ENCODE measurements at regions of chr4 and their contacts with region 1.

Region 1: DNA sequence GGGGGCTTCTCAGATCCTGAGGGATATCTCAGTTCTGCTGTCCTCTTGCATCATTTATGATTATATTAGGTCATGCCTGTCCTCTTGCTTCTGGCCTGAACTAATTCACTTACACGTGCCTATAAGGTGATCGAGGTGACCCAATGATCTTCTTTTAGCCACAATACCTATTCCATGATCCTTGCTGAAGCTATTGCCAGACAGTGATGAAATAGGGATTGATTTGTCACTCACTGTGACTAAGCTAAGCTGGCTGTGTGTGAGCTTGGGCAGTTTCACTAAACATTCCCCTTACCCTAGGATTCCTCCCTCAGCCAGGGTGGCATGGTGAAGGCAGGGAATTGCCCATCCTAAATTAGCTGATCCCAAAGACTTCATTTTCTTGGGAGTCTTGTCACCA is 19.0 kb downstream of the HADH start:
- DNase-seq: no peak
- ATAC-seq: no peak
- H3K4me3 ChIP-seq: no peak overlapping the region
- H3K27ac ChIP-seq: no peak overlapping the region
- H3K4me1 ChIP-seq: no peaks in the 10 kb centered on the region
- H3K27me3 ChIP-seq: no peaks in the 10 kb centered on the region
- CTCF ChIP-seq: no peak
- EP300 ChIP-seq: no peak
- POLR2A ChIP-seq: no peak
- RAD21 ChIP-seq: no peak

Region 2: GRCh38 chr4:107888237-107888636 is 120.5 kb before region 1 on chr4:
- CTCF ChIA-PET with region 1: no interaction called
- POLR2A ChIA-PET with region 1: no interaction called
- RAD21 ChIA-PET with region 1: no interaction called
- SMC1A ChIA-PET with region 1: no interaction called
- in situ Hi-C with region 1: no loop called
- intact Hi-C with region 1: no loop called
- DNase-seq: no peak
- ATAC-seq: no peak
- H3K4me3 ChIP-seq: no peak overlapping the region
- H3K27ac ChIP-seq: no peak overlapping the region
- H3K4me1 ChIP-seq: no peaks in the 10 kb centered on the region
- H3K27me3 ChIP-seq: no peaks in the 10 kb centered on the region
- CTCF ChIP-seq: no peak
- EP300 ChIP-seq: no peak
- POLR2A ChIP-seq: no peak
- RAD21 ChIP-seq: no peak

Region 3: DNA sequence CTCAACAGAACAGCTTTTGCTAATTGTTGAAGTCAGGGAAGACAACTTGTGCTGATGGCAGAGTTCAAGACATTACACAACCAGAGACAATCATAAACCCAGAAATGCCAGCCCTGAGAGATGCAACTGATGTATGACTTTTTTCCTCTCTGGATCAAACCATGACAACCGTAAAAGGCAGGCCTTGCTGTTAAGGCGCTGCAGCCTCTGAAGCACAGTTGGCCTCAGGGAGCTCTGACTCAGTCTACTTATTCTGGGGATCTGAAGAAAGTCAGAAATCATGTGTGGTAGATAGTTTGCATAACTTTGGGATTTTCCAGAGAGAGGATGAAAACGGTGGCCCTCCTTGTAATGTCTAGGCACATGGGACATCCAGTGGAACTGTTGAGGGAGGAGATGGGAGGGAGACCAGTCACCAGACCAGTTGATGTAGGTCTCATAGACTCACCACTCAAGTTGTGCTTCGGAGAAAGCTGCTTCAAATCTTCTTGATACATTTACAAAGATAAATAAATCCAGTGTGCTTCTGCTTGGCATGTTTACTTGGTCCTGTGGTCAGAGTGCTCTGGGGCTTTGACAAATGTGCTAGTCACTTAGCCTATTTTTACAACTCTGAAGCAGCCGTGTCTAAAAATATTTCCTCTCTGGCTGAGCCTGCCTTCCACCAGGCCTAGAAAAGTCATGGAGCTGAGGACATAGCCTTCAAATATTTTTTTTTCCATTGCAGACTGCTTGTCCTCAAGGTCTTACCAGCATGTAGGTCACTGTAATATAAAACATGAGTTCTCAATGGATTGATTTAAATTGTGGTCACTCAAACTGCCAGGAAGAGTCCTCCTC is 11.6 kb before region 1 on chr4:
- CTCF ChIA-PET with region 1: interaction called, 5 read pairs
- POLR2A ChIA-PET with region 1: interaction called, 6 read pairs
- RAD21 ChIA-PET with region 1: interaction called, 7 read pairs
- SMC1A ChIA-PET with region 1: interaction called, 31 read pairs
- in situ Hi-C with region 1: no loop called
- intact Hi-C with region 1: no loop called
- DNase-seq: no peak
- ATAC-seq: no peak
- H3K4me3 ChIP-seq: no peak overlapping the region
- H3K27ac ChIP-seq: no peak overlapping the region
- H3K4me1 ChIP-seq: peaks cover 24% of the 10 kb centered on the region
- H3K27me3 ChIP-seq: no peaks in the 10 kb centered on the region
- CTCF ChIP-seq: no peak
- EP300 ChIP-seq: no peak
- POLR2A ChIP-seq: no peak
- RAD21 ChIP-seq: no peak

Measured in GM12878 (cell line).